Adrenal gland (tissue), 19 donors: ENCODE measurements at regions of chr15 and their contacts with region 1.

Region 1: GRCh38 chr15:88657326-88658069 is 18.7 kb downstream of the ISG20 start:
- DNase-seq: peak in 3 of 7 donors; percentile 45 to 63 (median 58)
- H3K4me3 ChIP-seq: no peak overlapping the region
- H3K27ac ChIP-seq: no peak overlapping the region
- H3K4me1 ChIP-seq: no peaks in the 10 kb centered on the region
- H3K27me3 ChIP-seq: no peaks in the 10 kb centered on the region
- CTCF ChIP-seq: peak; percentile 75 to 82 (median 79)
- POLR2A ChIP-seq: no peak

Region 2: DNA sequence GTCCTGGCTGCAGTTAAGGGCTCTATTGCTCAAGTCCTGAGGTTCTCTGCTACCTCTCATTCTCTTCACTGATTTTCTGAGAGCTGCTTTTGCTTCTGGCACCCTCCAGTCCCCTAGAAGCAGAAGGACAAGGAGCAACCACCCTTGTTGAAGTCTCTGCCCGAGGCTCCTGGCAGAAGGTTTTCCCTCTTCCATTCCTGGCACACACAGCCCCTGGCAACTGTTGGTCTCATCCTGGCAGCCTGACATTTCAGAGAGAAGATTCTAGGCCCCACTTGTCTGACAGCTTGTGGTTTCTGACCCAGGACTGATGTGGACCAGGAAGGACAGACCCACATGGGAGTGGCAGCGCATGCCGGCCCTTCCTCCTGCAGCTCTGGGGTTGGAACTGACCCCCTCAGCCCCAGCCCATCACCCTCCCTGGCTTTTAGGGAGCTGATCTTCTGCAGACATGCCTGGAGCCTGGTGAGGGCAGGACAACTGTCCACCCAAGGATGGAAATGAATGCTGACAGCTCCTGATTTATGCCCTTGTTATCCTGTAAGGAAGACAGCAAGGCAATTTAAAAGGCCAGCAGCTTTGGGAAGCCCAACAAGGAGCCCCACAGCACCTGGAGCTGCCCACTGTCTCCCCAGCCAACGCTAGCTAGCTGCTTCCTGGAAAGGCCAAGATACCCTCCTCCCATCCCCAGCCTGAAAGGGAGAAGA is 388.0 kb before region 1 on chr15:
- intact Hi-C with region 1: no loop called
- DNase-seq: no peak
- H3K4me3 ChIP-seq: no peak overlapping the region
- H3K27ac ChIP-seq: no peak overlapping the region
- H3K4me1 ChIP-seq: no peaks in the 10 kb centered on the region
- H3K27me3 ChIP-seq: no peaks in the 10 kb centered on the region
- CTCF ChIP-seq: no peak
- POLR2A ChIP-seq: no peak

Region 3: GRCh38 chr15:88745696-88746095 is 88.2 kb after region 1 on chr15:
- intact Hi-C with region 1: no loop called
- DNase-seq: no peak
- H3K4me3 ChIP-seq: no peak overlapping the region
- H3K27ac ChIP-seq: no peak overlapping the region
- H3K4me1 ChIP-seq: no peaks in the 10 kb centered on the region
- H3K27me3 ChIP-seq: peaks cover 16% of the 10 kb centered on the region
- CTCF ChIP-seq: no peak
- POLR2A ChIP-seq: no peak

Region 4: GRCh38 chr15:89017370-89018066 is 360.0 kb after region 1 on chr15:
- intact Hi-C with region 1: loop called in 1 of 2 experiments (anchors 10 kb)
- DNase-seq: peak; percentile 70 to 90 (median 82)
- H3K4me3 ChIP-seq: peak overlapping the region in 1 of 4 donors; percentile 1
- H3K27ac ChIP-seq: peak overlapping the region in 3 of 5 donors; percentile 20 to 80 (median 58)
- H3K4me1 ChIP-seq: peaks cover 10 to 17% of the 10 kb centered on the region in 2 donors
- H3K27me3 ChIP-seq: no peaks in the 10 kb centered on the region
- CTCF ChIP-seq: peak; percentile 66 to 83 (median 76)
- POLR2A ChIP-seq: no peak